A549 (cell line): ENCODE measurements at regions of chr20 and their contacts with region 1.

Region 1: GRCh38 chr20:46757754-46758678 is 48.6 kb downstream of the SLC2A10 start:
- DNase-seq: peak; percentile 70
- ATAC-seq: peak; percentile 67 to 80; a peak in 4 of 6 replicates
- H3K4me3 ChIP-seq: no peak overlapping the region
- H3K27ac ChIP-seq: peak overlapping the region; percentile 4 to 57; a peak in 4 of 6 replicates
- H3K4me1 ChIP-seq: 0 out of 3 replicates have a peak, but pooled peaks cover under 1% of the 10 kb centered on the region
- CTCF ChIP-seq: peak; percentile 90
- EP300 ChIP-seq: no peak
- POLR2A ChIP-seq: no peak
- RAD21 ChIP-seq: peak; percentile 89

Region 2: GRCh38 chr20:46746956-46747526 is 11.0 kb before region 1 on chr20:
- CTCF ChIA-PET with region 1: interaction called, 62 read pairs
- POLR2A ChIA-PET with region 1: no interaction called
- DNase-seq: peak in 1 of 2 experiments; percentile 59
- ATAC-seq: peak; percentile 70 to 76
- H3K4me3 ChIP-seq: no peak overlapping the region
- H3K27ac ChIP-seq: no peak overlapping the region
- H3K4me1 ChIP-seq: peaks cover 13% of the 10 kb centered on the region
- CTCF ChIP-seq: no peak
- EP300 ChIP-seq: no peak
- POLR2A ChIP-seq: no peak
- RAD21 ChIP-seq: no peak

Region 3: DNA sequence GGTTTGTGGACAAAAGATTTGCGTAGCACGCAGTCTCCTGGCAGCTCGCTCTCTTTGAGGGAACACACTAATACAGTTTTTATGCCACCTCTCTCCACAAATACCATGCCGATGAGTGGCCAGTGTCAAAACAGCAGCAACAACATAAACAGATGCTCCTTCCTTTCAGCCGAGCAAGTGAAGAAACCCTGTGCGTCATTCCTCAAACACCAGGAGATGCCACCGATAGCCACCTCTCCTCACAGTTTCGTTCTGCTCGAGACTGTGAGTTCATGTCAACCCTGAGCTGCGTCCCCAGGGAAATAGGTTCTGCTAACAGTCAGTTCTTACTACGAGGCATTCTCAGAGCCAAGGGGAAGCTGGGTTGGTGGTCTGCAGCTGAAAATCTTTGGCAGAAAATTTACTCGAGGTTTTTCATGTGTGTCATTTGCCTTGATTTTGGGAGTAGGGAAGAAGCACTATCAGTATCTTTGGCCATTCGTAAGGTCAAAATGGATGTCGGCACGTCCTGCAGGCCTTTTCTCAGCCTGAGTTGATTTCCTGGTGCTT is 196.5 kb after region 1 on chr20:
- CTCF ChIA-PET with region 1: interaction called, 12 read pairs
- POLR2A ChIA-PET with region 1: no interaction called
- DNase-seq: peak; percentile 86 to 94
- ATAC-seq: peak; percentile 85
- H3K4me3 ChIP-seq: peak overlapping the region; percentile 23; the same call in 1 of the 3 replicates
- H3K27ac ChIP-seq: peak overlapping the region; percentile 74 to 84
- H3K4me1 ChIP-seq: peaks cover 31% of the 10 kb centered on the region
- CTCF ChIP-seq: no peak
- EP300 ChIP-seq: peak; percentile 49 to 60; a peak in 2 of 5 replicates
- POLR2A ChIP-seq: no peak
- RAD21 ChIP-seq: peak; percentile 15 to 43; a peak in 3 of 5 replicates

Region 4: DNA sequence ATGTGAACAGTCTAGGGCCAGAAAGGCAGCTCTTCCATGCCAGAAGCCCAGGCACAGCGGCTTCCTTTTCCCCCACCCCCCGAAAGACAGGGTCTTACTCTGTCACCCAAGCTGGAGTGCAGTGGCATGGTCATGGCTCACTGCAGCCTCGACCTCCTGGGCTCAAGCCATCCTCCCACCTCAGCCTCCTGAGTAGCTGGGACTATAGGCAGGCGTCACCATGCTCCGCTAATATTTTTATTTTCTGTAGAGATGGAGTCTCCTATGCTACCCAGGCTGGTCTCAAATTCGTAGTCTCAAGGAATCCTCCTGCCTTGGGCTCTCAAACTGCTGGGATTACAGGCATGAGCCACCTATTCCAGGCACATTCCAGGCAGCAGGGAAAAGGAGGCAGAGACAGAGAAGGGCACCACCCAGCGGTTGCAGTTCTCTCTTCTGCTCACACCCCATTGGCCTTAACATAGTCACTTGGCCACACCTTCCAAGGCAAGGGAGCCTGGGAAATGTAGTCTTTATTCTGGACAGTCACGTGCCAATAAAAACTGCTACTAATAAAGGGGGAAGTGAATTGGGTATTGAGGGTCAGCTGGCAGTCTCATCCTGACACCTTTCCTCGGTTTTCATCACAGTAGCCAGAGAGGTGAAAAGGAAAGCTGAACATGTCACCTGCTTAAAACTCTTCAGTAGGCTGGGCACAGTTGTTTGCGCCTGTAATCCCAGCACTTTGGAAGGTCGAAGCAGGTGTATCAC is 392.6 kb after region 1 on chr20:
- CTCF ChIA-PET with region 1: interaction called, 19 read pairs
- POLR2A ChIA-PET with region 1: no interaction called
- DNase-seq: peak; percentile 72 to 79
- ATAC-seq: peak; percentile 96 to 99
- H3K4me3 ChIP-seq: no peak overlapping the region
- H3K27ac ChIP-seq: peak overlapping the region in 1 of 2 experiments; percentile 56; a peak in 2 of 6 replicates
- H3K4me1 ChIP-seq: peaks cover 8% of the 10 kb centered on the region; the same call in 1 of the 3 replicates
- CTCF ChIP-seq: peak; percentile 66
- EP300 ChIP-seq: no peak
- POLR2A ChIP-seq: no peak
- RAD21 ChIP-seq: peak; percentile 81 to 91